HCT116 (cell line): ENCODE measurements at regions of chr1 and their contacts with region 1.

Region 1: GRCh38 chr1:53182111-53182593 is 14.5 kb upstream of the CPT2 start:
- DNase-seq: peak; percentile 80
- ATAC-seq: peak; percentile 94
- H3K4me3 ChIP-seq: no peak overlapping the region
- H3K27ac ChIP-seq: no peak overlapping the region
- H3K4me1 ChIP-seq: peaks cover 0 to 13% of the 10 kb centered on the region in 2 experiments; a peak in 2 of 4 replicates
- H3K27me3 ChIP-seq: no peaks in the 10 kb centered on the region
- CTCF ChIP-seq: peak; percentile 67 to 96 (median 77)
- POLR2A ChIP-seq: no peak
- RAD21 ChIP-seq: peak; percentile 72

Region 2: GRCh38 chr1:52904927-52905698 is 277.0 kb before region 1 on chr1:
- CTCF ChIA-PET with region 1: interaction called, 4 read pairs
- POLR2A ChIA-PET with region 1: no interaction called
- RAD21 ChIA-PET with region 1: no interaction called
- intact Hi-C with region 1: loop called (anchors 1 kb)
- DNase-seq: peak; percentile 10
- ATAC-seq: peak; percentile 98
- H3K4me3 ChIP-seq: no peak overlapping the region
- H3K27ac ChIP-seq: no peak overlapping the region
- H3K4me1 ChIP-seq: peaks cover 0 to 10% of the 10 kb centered on the region in 2 experiments; a peak in 2 of 4 replicates
- H3K27me3 ChIP-seq: no peaks in the 10 kb centered on the region
- CTCF ChIP-seq: peak; percentile 31 to 64 (median 56); a peak in 5 of 6 replicates
- POLR2A ChIP-seq: no peak
- RAD21 ChIP-seq: peak; percentile 68

Region 3: DNA sequence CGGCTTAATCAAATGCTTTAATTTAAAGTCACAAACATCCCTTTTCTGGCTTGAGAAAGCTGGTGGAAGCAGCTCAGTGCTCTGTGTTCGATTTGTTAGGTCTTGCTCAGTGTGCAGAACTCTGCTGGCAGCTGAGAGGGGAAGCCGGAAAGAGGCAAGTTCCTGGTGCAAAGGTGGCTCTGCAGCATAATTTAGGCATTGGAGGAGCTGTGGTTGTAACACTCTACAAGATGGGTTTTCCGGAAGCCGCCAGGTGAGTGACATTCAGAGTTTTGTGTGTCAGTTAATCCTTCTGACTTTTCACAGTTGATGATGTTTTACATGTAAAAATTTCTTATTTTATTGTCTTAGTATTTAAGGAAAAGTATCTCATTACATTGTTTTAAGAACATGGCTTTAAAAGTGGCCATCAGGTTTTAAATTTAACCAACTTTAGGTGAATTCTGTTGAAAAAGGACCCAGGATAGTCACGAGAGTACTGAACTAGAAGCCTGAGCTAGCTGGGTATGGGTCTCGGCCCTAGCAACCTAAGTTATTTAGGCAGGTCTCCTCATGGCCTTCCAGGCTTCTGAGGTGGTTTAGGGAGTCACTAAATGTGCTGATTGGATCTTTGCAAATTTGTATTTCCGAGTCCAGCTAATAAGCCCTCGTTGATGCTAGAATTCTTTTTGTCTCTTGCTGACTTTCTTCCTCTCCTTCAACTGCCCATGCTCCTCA is 167.2 kb before region 1 on chr1:
- CTCF ChIA-PET with region 1: interaction called, 3 read pairs
- POLR2A ChIA-PET with region 1: no interaction called
- RAD21 ChIA-PET with region 1: no interaction called
- intact Hi-C with region 1: loop called (anchors 10 kb)
- DNase-seq: peak; percentile 86
- ATAC-seq: peak; percentile 98
- H3K4me3 ChIP-seq: peak overlapping the region; percentile 66 to 77
- H3K27ac ChIP-seq: peak overlapping the region; percentile 34; the same call in 1 of the 2 replicates
- H3K4me1 ChIP-seq: peaks cover 3 to 9% of the 10 kb centered on the region in 2 experiments; a peak in 3 of 4 replicates
- H3K27me3 ChIP-seq: no peaks in the 10 kb centered on the region
- CTCF ChIP-seq: no peak
- POLR2A ChIP-seq: no peak
- RAD21 ChIP-seq: no peak

Region 4: DNA sequence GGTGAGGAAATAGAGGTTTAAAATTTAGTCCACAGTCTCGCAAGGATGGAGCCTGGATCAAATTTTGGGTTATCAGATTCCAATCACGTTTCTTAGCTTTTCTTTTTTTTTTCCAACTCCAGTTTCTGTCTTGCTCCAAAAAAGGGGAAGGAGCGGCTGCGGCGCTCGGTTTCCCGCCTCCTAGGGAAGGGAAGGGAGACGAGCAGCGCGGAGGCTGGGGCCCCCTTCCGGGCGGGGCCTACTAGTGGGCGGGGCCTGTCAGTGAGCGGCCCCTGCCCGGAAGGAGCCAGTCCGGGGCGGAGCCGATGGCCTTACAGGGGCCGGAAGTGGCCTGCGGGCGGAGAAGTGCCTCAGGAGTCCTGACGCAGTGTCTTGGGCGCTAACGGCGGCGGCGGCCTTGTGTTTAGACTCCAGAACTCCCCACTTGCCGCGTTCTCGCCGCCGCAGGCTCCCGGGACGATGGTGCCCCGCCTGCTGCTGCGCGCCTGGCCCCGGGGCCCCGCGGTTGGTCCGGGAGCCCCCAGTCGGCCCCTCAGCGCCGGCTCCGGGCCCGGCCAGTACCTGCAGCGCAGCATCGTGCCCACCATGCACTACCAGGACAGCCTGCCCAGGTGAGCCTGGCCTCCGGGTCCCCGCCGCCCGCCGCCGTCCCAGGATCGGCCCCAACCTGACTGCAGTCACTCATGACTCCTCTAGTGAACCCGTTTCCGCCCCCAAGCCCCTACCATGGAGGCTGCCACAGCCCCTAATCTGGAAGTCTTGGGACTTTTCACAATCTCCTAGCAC is 14.5 kb after region 1 on chr1 and contains the start of gene CPT2:
- CTCF ChIA-PET with region 1: interaction called, 15 read pairs
- POLR2A ChIA-PET with region 1: no interaction called
- RAD21 ChIA-PET with region 1: no interaction called
- intact Hi-C with region 1: no loop called
- DNase-seq: peak; percentile 71
- ATAC-seq: peak; percentile 99
- H3K4me3 ChIP-seq: peak within 1 kb of the TSS; percentile 66 to 83
- H3K27ac ChIP-seq: peak within 1 kb of the TSS; percentile 81
- H3K4me1 ChIP-seq: peaks cover 10 to 24% of the 10 kb centered on the region in 2 experiments
- H3K27me3 ChIP-seq: no peaks in the 10 kb centered on the region
- CTCF ChIP-seq: no peak
- POLR2A ChIP-seq: peak; percentile 84
- RAD21 ChIP-seq: no peak
- total RNA-seq, gene CPT2: 18.1 TPM

Region 5: GRCh38 chr1:53207726-53208125 is 25.6 kb after region 1 on chr1:
- CTCF ChIA-PET with region 1: no interaction called
- POLR2A ChIA-PET with region 1: no interaction called
- RAD21 ChIA-PET with region 1: no interaction called
- intact Hi-C with region 1: no loop called
- DNase-seq: no peak
- ATAC-seq: no peak
- H3K4me3 ChIP-seq: no peak overlapping the region
- H3K27ac ChIP-seq: no peak overlapping the region
- H3K4me1 ChIP-seq: no peaks in the 10 kb centered on the region
- H3K27me3 ChIP-seq: no peaks in the 10 kb centered on the region
- CTCF ChIP-seq: no peak
- POLR2A ChIP-seq: no peak
- RAD21 ChIP-seq: no peak